ENCODE measurements at regions of chr16 and their contacts with region 1.

Region 1: DNA sequence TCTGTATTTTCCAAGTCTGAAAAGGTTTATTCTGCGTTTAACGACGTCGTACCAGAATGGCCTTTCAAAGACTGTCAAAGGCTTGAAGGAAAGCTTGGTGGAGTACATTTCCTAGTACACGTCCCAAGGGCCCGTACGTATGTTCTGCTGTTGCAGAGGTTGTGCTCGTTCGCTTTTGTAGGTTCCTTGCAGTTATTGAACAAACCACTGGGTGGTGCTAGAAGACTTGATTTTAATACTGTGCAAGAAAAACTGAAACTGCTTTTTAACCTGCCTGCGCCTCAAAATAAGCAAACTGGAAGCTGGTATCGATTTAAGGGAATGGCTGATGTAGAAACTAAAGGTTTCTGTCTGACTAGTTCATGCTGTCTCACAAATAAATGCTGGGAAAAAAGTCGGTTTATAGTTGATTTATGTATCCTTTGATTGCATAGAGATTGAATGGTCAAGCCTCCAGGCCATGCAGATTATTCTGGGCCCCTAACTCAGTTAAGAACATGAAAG is 54.6 kb downstream of the USP10 start:
- DNase-seq: peak; percentile 76
- ATAC-seq: peak; percentile 78
- H3K4me3 Mint-ChIP-seq: no peak overlapping the region
- H3K27ac Mint-ChIP-seq: peak overlapping the region; percentile 49
- H3K4me1 Mint-ChIP-seq: peaks cover 84% of the 10 kb centered on the region
- H3K27me3 Mint-ChIP-seq: no peaks in the 10 kb centered on the region

Region 2: GRCh38 chr16:84658690-84659089 is 95.7 kb before region 1 on chr16:
- CTCF ChIA-PET with region 1: no interaction called
- POLR2A ChIA-PET with region 1: no interaction called
- intact Hi-C with region 1: no loop called
- DNase-seq: no peak
- ATAC-seq: no peak
- H3K4me3 Mint-ChIP-seq: no peak overlapping the region
- H3K27ac Mint-ChIP-seq: no peak overlapping the region
- H3K4me1 Mint-ChIP-seq: peaks cover 32% of the 10 kb centered on the region
- H3K27me3 Mint-ChIP-seq: no peaks in the 10 kb centered on the region

Region 3: GRCh38 chr16:84732674-84733352 is 21.6 kb before region 1 on chr16:
- CTCF ChIA-PET with region 1: interaction called, 74 read pairs
- POLR2A ChIA-PET with region 1: no interaction called
- intact Hi-C with region 1: no loop called
- DNase-seq: no peak
- ATAC-seq: no peak
- H3K4me3 Mint-ChIP-seq: no peak overlapping the region
- H3K27ac Mint-ChIP-seq: no peak overlapping the region
- H3K4me1 Mint-ChIP-seq: peaks cover 59% of the 10 kb centered on the region
- H3K27me3 Mint-ChIP-seq: no peaks in the 10 kb centered on the region

Region 4: GRCh38 chr16:84768061-84768807 is 13.8 kb after region 1 on chr16:
- CTCF ChIA-PET with region 1: interaction called, 10 read pairs
- POLR2A ChIA-PET with region 1: no interaction called
- intact Hi-C with region 1: no loop called
- DNase-seq: no peak
- ATAC-seq: no peak
- H3K4me3 Mint-ChIP-seq: no peak overlapping the region
- H3K27ac Mint-ChIP-seq: peak overlapping the region; percentile 43
- H3K4me1 Mint-ChIP-seq: peaks cover 39% of the 10 kb centered on the region
- H3K27me3 Mint-ChIP-seq: no peaks in the 10 kb centered on the region

Region 5: DNA sequence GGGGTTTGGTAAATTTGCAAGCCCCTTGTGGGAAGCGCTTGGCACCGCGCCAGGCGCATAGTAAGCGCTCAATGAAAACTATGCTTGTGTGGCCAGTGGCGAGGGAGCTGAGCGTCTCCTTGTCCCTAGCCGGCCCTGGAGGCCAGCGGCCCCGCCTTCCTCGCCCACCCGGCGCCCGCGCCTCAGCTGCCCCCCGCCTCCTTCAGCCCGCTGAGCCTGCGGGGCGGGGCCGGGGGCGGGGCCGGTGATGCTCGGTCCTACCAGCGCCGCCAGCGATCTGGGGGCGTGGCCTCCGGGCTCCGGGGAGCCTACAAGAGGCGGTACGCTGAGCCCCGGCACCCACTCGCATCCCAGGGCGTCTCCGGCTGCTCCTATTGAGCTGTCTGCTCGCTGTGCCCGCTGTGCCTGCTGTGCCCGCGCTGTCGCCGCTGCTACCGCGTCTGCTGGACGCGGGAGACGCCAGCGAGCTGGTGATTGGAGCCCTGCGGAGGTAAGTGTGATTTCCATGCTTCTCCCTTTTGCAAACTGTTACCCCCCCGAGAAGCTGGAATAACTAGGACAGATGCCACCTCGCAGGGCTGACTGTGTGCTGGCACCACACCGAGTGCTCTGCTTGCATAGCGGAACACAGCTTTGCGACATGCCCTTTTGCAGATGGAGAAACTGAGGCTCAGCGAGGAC is 65.4 kb after region 1 on chr16 and contains the start of gene CRISPLD2:
- CTCF ChIA-PET with region 1: interaction called, 5 read pairs
- POLR2A ChIA-PET with region 1: interaction called, 10 read pairs
- intact Hi-C with region 1: no loop called
- DNase-seq: peak; percentile 93
- ATAC-seq: peak; percentile 100
- H3K4me3 Mint-ChIP-seq: peak within 1 kb of the TSS; percentile 58
- H3K27ac Mint-ChIP-seq: no peak within 1 kb of the TSS
- H3K4me1 Mint-ChIP-seq: peaks cover 8% of the 10 kb centered on the region
- H3K27me3 Mint-ChIP-seq: peaks cover 13% of the 10 kb centered on the region
- total RNA-seq, gene CRISPLD2: 0.05 to 0.11 TPM

Region 6: GRCh38 chr16:84925092-84925772 is 170.8 kb after region 1 on chr16:
- CTCF ChIA-PET with region 1: interaction called, 11 read pairs
- POLR2A ChIA-PET with region 1: no interaction called
- intact Hi-C with region 1: loop called in 1 of 2 experiments (anchors 1 kb)
- DNase-seq: peak; percentile 86
- ATAC-seq: peak; percentile 77
- H3K4me3 Mint-ChIP-seq: no peak overlapping the region
- H3K27ac Mint-ChIP-seq: no peak overlapping the region
- H3K4me1 Mint-ChIP-seq: no peaks in the 10 kb centered on the region
- H3K27me3 Mint-ChIP-seq: no peaks in the 10 kb centered on the region

Region 7: DNA sequence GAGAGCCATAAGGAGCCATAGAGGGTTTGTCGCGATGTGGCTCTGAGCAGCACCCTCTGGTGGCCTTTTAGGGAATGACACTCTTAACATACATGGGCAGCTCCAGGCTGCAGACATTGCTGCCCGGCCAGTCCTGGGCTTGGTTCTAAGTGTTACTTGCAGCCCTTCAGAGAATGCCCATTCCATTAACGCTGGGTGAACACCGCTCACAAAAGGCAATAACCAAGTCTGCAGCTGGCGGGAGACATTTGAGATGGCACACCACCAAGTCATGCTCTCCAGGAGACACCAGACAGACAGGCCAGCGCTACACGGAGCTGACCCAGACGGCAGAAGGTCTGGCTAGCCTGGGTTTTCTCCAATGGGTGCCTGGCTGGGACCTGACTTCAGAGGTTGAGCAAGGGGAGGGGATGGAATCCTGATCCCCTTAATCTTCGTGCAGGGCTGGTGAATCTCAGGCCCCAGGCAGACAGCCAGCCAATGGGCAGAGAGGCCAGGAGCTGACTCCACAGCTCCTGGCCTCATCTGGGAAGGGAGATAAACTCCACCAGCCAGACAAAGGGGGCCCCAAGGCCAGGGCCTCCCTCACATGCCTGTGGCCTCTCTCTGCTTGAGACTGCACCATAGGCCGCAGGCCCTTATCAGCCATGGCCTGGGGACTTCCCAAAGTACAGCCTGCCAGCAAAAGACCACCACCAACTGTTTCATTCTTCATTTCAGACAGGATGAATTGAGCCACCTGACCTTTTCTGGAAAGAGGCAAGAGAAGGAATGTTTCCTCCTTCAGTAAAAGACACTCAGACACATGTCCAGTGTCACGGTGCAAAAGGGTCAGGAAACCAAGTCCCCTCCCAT is 198.2 kb after region 1 on chr16:
- CTCF ChIA-PET with region 1: interaction called, 73 read pairs
- POLR2A ChIA-PET with region 1: no interaction called
- intact Hi-C with region 1: loop called (anchors 1 kb)
- DNase-seq: peak; percentile 79
- ATAC-seq: peak; percentile 91
- H3K4me3 Mint-ChIP-seq: no peak overlapping the region
- H3K27ac Mint-ChIP-seq: no peak overlapping the region
- H3K4me1 Mint-ChIP-seq: no peaks in the 10 kb centered on the region
- H3K27me3 Mint-ChIP-seq: no peaks in the 10 kb centered on the region

Region 8: GRCh38 chr16:85220125-85220839 is 465.9 kb after region 1 on chr16:
- CTCF ChIA-PET with region 1: no interaction called
- POLR2A ChIA-PET with region 1: no interaction called
- intact Hi-C with region 1: no loop called
- DNase-seq: no peak
- ATAC-seq: no peak
- H3K4me3 Mint-ChIP-seq: no peak overlapping the region
- H3K27ac Mint-ChIP-seq: no peak overlapping the region
- H3K4me1 Mint-ChIP-seq: peaks cover 9% of the 10 kb centered on the region
- H3K27me3 Mint-ChIP-seq: no peaks in the 10 kb centered on the region